T-cell (primary cell): ENCODE measurements at regions of chr5 and their contacts with region 1.

Region 1: DNA sequence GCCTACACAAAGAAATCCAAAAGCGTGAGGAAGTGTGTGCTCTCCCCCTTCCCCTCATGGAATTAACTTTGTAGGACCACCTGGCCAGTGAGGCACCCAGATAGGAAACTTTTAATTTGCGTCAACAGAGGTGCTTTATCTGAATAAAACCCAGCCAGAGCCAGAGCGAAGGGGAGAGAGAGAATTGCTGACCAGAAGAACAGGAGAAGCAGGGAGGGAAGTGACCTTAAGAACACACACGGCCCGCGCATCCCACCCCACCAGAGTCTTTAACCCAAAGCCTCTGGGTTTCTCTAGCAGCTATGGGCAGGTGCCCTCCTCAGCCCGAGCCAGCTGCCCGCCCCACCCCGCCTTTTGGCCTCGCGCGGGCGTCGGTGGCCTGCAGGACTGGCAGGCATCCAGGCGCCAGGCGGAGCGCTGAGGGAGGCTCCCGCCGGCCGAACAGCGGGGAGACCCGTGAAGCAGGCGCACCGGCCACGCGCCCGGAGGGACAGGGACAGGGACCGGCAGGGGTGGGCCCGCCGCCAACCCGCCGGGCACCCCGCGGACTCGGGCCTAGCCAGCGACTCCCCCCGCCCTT is 580 bp downstream of the ERAP1 start:
- DNase-seq: peak in 7 of 35 experiments; percentile 1 to 52 (median 18)
- ATAC-seq: peak in 3 of 4 experiments; percentile 11 to 28 (median 22)
- H3K4me3 ChIP-seq: peak overlapping the region; percentile 86 to 89
- H3K4me3 Mint-ChIP-seq: peak overlapping the region; percentile 93 to 95 (median 95)
- H3K27ac ChIP-seq: peak overlapping the region; percentile 96
- H3K27ac Mint-ChIP-seq: peak overlapping the region; percentile 97 to 99
- H3K4me1 ChIP-seq: peaks cover 33 to 48% of the 10 kb centered on the region in 2 experiments
- H3K4me1 Mint-ChIP-seq: peaks cover 80 to 89% (median 81%) of the 10 kb centered on the region in 3 donors
- H3K27me3 ChIP-seq: no peaks in the 10 kb centered on the region
- H3K27me3 Mint-ChIP-seq: no peaks in the 10 kb centered on the region

Region 2: GRCh38 chr5:96629774-96630173 is 177.4 kb before region 1 on chr5:
- CTCF ChIA-PET with region 1: no interaction called
- POLR2A ChIA-PET with region 1: no interaction called
- DNase-seq: no peak
- ATAC-seq: no peak
- H3K4me3 ChIP-seq: no peak overlapping the region
- H3K4me3 Mint-ChIP-seq: no peak overlapping the region
- H3K27ac ChIP-seq: no peak overlapping the region
- H3K27ac Mint-ChIP-seq: no peak overlapping the region
- H3K4me1 ChIP-seq: no peaks in the 10 kb centered on the region
- H3K4me1 Mint-ChIP-seq: peaks cover 0 to 8% (median 6%) of the 10 kb centered on the region in 3 donors
- H3K27me3 ChIP-seq: no peaks in the 10 kb centered on the region
- H3K27me3 Mint-ChIP-seq: peaks cover 6 to 9% of the 10 kb centered on the region in 2 donors

Region 3: DNA sequence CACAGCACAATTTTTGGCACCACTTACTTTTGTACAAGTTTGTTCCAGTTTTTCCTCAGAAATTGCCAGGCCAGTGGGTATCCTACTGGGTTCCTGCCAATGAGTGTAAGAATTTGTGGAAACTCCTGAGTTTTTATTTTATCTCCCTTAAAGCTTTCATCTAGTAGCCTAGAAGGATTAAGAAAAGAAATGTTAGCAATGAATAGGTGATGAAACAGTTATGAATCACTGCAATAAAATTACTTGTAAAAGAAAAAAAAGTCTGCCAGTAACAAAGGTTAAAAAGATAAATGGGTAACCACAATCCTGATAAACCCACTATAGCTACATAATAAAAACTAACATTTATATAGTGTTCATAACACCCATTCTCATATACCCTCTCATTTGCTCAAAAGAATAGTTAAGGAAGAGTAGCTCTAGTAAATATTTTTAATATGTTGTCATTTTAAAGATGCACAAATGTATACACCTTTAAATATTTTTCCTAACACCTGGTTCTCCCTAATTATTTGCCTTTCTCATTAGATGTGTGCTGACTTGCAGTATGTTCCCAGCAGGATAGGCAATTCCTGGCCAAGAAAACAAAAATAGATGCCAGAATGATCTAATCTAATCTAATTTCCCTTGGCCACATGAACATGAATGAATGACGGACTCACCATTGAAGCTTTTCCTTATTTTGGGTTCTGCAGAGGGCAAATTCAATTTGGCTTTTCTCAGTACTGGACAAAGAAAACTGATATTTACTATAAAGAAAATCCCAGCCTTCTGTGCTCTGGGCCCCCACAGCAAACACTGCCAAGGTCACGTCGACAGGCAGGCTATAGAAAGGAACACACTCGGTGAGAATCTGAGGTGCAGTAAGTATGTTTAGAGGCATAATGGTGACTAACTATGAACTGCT is 25.9 kb before region 1 on chr5:
- CTCF ChIA-PET with region 1: no interaction called
- POLR2A ChIA-PET with region 1: interaction called in 1 of 2 experiments, 14 read pairs
- DNase-seq: no peak
- ATAC-seq: no peak
- H3K4me3 ChIP-seq: no peak overlapping the region
- H3K4me3 Mint-ChIP-seq: no peak overlapping the region
- H3K27ac ChIP-seq: no peak overlapping the region
- H3K27ac Mint-ChIP-seq: peak overlapping the region; percentile 13 to 46
- H3K4me1 ChIP-seq: no peaks in the 10 kb centered on the region
- H3K4me1 Mint-ChIP-seq: peaks cover 1 to 17% (median 4%) of the 10 kb centered on the region in 3 donors
- H3K27me3 ChIP-seq: no peaks in the 10 kb centered on the region
- H3K27me3 Mint-ChIP-seq: no peaks in the 10 kb centered on the region

Region 4: DNA sequence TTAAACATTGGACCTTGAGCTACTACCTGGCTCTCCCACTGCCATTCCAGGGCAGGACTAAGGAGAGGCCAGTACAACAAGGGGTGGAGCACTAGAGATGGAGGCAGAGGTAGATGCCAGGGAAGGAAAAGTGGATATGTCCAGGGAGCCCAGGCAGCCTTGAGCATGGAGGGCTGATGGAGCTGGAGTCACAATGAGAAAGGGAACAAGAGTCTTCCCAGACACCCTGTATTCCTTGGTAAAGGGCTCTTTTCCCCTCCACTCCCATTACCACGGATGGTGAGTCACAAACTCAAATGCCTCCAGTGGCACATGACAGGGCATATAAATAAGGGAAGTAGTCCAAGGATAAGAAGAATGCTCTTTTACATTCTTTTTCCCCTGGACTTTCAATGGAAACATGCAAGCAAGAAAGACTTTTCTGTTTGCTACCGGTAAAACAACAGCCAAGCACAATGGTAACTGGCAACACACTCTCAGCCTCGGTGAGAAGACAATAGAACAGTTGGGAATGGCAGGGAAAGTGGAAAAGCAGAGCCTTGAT is 16.1 kb before region 1 on chr5:
- CTCF ChIA-PET with region 1: interaction called in 1 of 2 experiments, 3 read pairs
- POLR2A ChIA-PET with region 1: interaction called, 7 to 14 read pairs
- DNase-seq: no peak
- ATAC-seq: no peak
- H3K4me3 ChIP-seq: no peak overlapping the region
- H3K4me3 Mint-ChIP-seq: no peak overlapping the region
- H3K27ac ChIP-seq: peak overlapping the region; percentile 4
- H3K27ac Mint-ChIP-seq: peak overlapping the region; percentile 71 to 81
- H3K4me1 ChIP-seq: peaks cover 7 to 11% of the 10 kb centered on the region in 2 experiments
- H3K4me1 Mint-ChIP-seq: peaks cover 42 to 46% (median 44%) of the 10 kb centered on the region in 3 donors
- H3K27me3 ChIP-seq: no peaks in the 10 kb centered on the region
- H3K27me3 Mint-ChIP-seq: no peaks in the 10 kb centered on the region

Region 5: GRCh38 chr5:96876292-96876850 is 69.2 kb after region 1 on chr5 and contains the start of gene ERAP2:
- CTCF ChIA-PET with region 1: interaction called, 3 to 14 read pairs
- POLR2A ChIA-PET with region 1: interaction called, 5 to 7 read pairs
- DNase-seq: peak in 8 of 35 experiments; percentile 9 to 76 (median 20)
- ATAC-seq: peak; percentile 72 to 80 (median 78)
- H3K4me3 ChIP-seq: peak within 1 kb of the TSS; percentile 78 to 87
- H3K4me3 Mint-ChIP-seq: peak within 1 kb of the TSS; percentile 92 to 99 (median 96)
- H3K27ac ChIP-seq: peak within 1 kb of the TSS; percentile 87
- H3K27ac Mint-ChIP-seq: peak within 1 kb of the TSS; percentile 97 to 99
- H3K4me1 ChIP-seq: peaks cover 46 to 50% of the 10 kb centered on the region in 2 experiments
- H3K4me1 Mint-ChIP-seq: peaks cover 73 to 78% (median 75%) of the 10 kb centered on the region in 3 donors
- H3K27me3 ChIP-seq: no peaks in the 10 kb centered on the region
- H3K27me3 Mint-ChIP-seq: no peaks in the 10 kb centered on the region
- total RNA-seq, gene ERAP2: 40.4 to 162 (median 71.6) TPM

Region 6: GRCh38 chr5:97094579-97095317 is 287.6 kb after region 1 on chr5:
- CTCF ChIA-PET with region 1: no interaction called
- POLR2A ChIA-PET with region 1: no interaction called
- DNase-seq: no peak
- ATAC-seq: peak in 1 of 4 experiments; percentile 16
- H3K4me3 ChIP-seq: no peak overlapping the region
- H3K4me3 Mint-ChIP-seq: no peak overlapping the region
- H3K27ac ChIP-seq: no peak overlapping the region
- H3K27ac Mint-ChIP-seq: no peak overlapping the region
- H3K4me1 ChIP-seq: no peaks in the 10 kb centered on the region
- H3K4me1 Mint-ChIP-seq: peaks cover 5 to 8% (median 8%) of the 10 kb centered on the region in 3 donors
- H3K27me3 ChIP-seq: no peaks in the 10 kb centered on the region
- H3K27me3 Mint-ChIP-seq: peaks cover under 1 to 7% of the 10 kb centered on the region in 2 donors